CD8-positive, alpha-beta T cell (primary cell): ENCODE measurements at regions of chr11 and their contacts with region 1.

Region 1: DNA sequence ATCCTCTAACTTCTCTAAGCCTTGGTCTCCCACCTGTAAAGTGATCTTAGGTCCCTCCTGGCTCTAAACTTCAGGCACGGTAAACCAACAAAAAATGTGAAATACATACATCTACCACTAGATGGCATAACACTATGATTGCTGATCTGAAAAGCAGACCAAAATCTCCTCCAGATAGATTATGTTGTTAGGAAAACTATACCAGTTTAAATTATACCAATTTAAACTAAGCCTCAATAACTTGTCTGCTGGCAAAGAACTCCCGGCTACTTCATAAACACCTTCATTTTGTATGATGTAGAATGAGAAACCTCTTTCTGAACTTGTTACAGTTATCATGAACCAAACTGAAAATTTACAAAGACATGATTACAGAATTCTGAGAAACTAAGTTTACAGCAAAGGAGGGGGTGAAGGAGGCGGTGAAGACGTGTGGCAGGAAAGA is 85.9 kb downstream of the SBF2 start:
- DNase-seq: peak in 2 of 9 experiments; percentile 58 to 70
- ATAC-seq: peak; percentile 67
- H3K4me3 ChIP-seq: no peak overlapping the region
- H3K4me3 Mint-ChIP-seq: no peak overlapping the region
- H3K27ac ChIP-seq: no peak overlapping the region
- H3K27ac Mint-ChIP-seq: no peak overlapping the region
- H3K4me1 ChIP-seq: no peaks in the 10 kb centered on the region
- H3K4me1 Mint-ChIP-seq: no peaks in the 10 kb centered on the region
- H3K27me3 ChIP-seq: no peaks in the 10 kb centered on the region
- H3K27me3 Mint-ChIP-seq: no peaks in the 10 kb centered on the region
- CTCF ChIP-seq: peak; percentile 72

Region 2: DNA sequence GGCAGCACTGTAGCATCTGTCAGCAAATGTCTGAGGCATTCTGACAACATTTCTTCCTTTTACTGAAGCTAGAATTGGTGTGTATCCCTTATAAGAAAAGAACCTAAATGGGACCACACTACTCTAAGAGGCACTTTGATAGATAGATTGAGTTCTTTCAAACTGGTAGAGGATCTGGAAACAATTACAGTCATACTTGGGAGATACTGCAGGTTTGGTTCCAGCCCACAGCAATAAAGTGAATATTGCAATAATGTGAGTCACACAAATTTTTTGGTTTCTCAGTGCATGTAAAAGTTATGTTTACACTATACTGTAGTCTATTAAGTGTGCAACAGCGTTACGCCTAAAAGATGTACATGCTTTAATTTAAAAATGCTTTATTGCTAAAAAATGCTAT is 11.1 kb before region 1 on chr11:
- CTCF ChIA-PET with region 1: interaction called, 15 read pairs
- POLR2A ChIA-PET with region 1: no interaction called
- intact Hi-C with region 1: no loop called
- DNase-seq: no peak
- ATAC-seq: no peak
- H3K4me3 ChIP-seq: no peak overlapping the region
- H3K4me3 Mint-ChIP-seq: no peak overlapping the region
- H3K27ac ChIP-seq: no peak overlapping the region
- H3K27ac Mint-ChIP-seq: no peak overlapping the region
- H3K4me1 ChIP-seq: no peaks in the 10 kb centered on the region
- H3K4me1 Mint-ChIP-seq: no peaks in the 10 kb centered on the region
- H3K27me3 ChIP-seq: no peaks in the 10 kb centered on the region
- H3K27me3 Mint-ChIP-seq: no peaks in the 10 kb centered on the region
- CTCF ChIP-seq: no peak

Region 3: DNA sequence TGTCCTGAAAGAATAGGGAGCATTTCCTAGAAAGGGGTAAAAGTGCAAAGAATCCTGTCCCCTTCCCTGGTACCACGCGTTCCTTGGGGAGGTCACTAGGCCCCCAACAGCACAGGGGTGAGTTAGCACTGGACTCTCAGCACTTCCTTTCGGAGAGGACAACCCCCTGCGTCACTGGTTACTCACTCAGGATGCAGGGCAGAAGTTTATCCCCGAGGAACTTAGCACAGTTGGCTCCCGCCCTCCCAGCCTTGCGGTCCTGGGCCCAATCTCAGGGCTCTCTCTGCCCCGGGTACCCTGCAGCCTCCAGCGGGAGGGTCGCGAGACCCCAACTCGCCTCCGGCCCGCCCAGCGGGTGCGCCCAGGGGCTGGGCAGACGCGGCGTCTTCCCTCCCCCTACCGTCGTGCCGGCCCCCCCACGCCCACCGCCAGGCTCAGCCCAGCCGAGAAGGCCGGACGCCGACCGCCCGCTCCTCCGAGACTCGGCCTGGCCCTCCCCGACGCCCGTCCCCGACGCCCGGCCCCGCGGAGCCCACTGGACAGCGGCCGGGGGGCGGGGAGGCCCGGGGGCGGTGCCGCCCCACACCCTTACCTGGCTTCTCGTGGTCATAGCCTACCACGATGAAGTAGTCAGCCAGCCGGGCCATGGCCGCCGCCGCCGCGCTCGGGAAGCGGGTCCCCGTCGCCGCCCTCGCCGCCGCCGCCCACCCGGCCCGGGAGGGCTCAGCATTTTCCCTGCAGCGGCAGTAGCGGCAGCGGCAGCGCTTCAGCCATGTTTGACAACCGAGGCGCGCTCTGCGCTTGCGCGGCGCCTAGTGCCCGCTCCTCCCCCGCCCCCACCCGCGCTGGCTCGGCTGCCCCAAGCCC is 85.5 kb after region 1 on chr11 and contains the start of gene SBF2:
- CTCF ChIA-PET with region 1: interaction called, 11 read pairs
- POLR2A ChIA-PET with region 1: no interaction called
- intact Hi-C with region 1: no loop called
- DNase-seq: peak; percentile 60 to 90 (median 80)
- ATAC-seq: peak; percentile 67
- H3K4me3 ChIP-seq: peak within 1 kb of the TSS; percentile 50 to 67
- H3K4me3 Mint-ChIP-seq: peak within 1 kb of the TSS; percentile 78
- H3K27ac ChIP-seq: no peak within 1 kb of the TSS
- H3K27ac Mint-ChIP-seq: no peak within 1 kb of the TSS
- H3K4me1 ChIP-seq: peaks cover 23% of the 10 kb centered on the region
- H3K4me1 Mint-ChIP-seq: peaks cover 32% of the 10 kb centered on the region
- H3K27me3 ChIP-seq: peaks cover 6 to 12% of the 10 kb centered on the region in 2 experiments
- H3K27me3 Mint-ChIP-seq: peaks cover 17% of the 10 kb centered on the region
- CTCF ChIP-seq: no peak
- total RNA-seq, gene SBF2: 12.6 to 14.3 TPM

Region 4: DNA sequence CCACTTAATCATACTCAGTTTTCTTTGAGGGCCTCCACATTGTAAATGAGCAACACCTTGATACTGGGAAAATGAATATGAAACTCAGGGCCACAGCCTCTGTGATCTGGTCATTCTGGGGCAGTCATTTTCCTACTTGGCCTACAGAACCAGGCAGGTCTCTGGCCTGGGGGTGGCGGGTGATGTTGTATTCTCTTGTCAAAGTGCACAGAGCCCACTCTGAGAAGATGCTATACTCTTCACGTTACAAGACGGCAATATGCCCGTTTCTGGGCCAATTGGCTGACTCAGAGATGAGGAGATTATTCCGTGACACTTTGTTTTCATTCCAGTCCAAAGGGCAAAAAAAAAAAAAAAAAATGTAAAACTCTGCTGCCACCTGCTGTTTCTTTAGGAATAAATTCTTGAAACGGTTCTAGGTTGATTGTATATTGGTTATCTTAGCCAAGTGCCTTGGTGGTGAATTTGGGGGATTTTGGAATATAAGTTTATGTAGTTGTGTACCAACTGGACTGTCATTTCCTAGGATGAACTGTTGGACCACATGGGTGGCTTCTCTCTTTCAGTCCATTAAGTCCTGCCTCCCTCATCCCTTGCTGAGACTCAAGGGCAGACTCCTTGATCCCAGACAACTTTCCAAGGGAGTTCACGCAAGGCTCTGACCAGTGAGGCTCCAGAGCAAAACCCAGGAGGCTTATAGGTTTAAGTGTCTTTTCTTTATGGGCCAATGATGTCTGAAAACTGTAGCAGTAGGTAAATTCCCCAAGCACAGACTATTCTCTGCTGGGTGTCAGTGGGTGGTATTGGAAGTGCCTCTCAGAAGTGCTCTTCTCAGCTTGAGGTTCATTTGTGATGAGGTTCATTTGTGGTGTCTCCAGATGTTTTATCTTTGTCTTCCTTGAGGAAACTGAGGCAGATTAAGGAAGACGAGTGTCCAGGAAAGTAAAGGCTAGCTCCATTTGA is 115.0 kb after region 1 on chr11:
- CTCF ChIA-PET with region 1: interaction called, 24 read pairs
- POLR2A ChIA-PET with region 1: interaction called, 3 read pairs
- intact Hi-C with region 1: loop called (anchors 1 kb)
- DNase-seq: peak in 5 of 9 experiments; percentile 26 to 67 (median 38)
- ATAC-seq: peak; percentile 82
- H3K4me3 ChIP-seq: no peak overlapping the region
- H3K4me3 Mint-ChIP-seq: no peak overlapping the region
- H3K27ac ChIP-seq: no peak overlapping the region
- H3K27ac Mint-ChIP-seq: no peak overlapping the region
- H3K4me1 ChIP-seq: no peaks in the 10 kb centered on the region
- H3K4me1 Mint-ChIP-seq: peaks cover 3% of the 10 kb centered on the region
- H3K27me3 ChIP-seq: no peaks in the 10 kb centered on the region
- H3K27me3 Mint-ChIP-seq: peaks cover 4% of the 10 kb centered on the region
- CTCF ChIP-seq: peak; percentile 55

Region 5: GRCh38 chr11:10735481-10736475 is 527.6 kb after region 1 on chr11:
- CTCF ChIA-PET with region 1: interaction called, 3 read pairs
- POLR2A ChIA-PET with region 1: no interaction called
- intact Hi-C with region 1: loop called in 1 of 2 experiments (anchors 2 kb)
- DNase-seq: peak; percentile 73 to 91 (median 85)
- ATAC-seq: peak; percentile 99
- H3K4me3 ChIP-seq: peak overlapping the region; percentile 3 to 20
- H3K4me3 Mint-ChIP-seq: peak overlapping the region; percentile 56
- H3K27ac ChIP-seq: no peak overlapping the region
- H3K27ac Mint-ChIP-seq: no peak overlapping the region
- H3K4me1 ChIP-seq: peaks cover 9% of the 10 kb centered on the region
- H3K4me1 Mint-ChIP-seq: peaks cover 13% of the 10 kb centered on the region
- H3K27me3 ChIP-seq: no peaks in the 10 kb centered on the region
- H3K27me3 Mint-ChIP-seq: no peaks in the 10 kb centered on the region
- CTCF ChIP-seq: peak; percentile 96